Sciatic nerve (tissue), 2 donors: ENCODE measurements at regions of chr18 and their contacts with region 1.

Region 1: GRCh38 chr18:64893349-64893748 is 744.5 kb upstream of the LINC00305 start:
- DNase-seq: no peak
- ATAC-seq: no peak

Region 2: DNA sequence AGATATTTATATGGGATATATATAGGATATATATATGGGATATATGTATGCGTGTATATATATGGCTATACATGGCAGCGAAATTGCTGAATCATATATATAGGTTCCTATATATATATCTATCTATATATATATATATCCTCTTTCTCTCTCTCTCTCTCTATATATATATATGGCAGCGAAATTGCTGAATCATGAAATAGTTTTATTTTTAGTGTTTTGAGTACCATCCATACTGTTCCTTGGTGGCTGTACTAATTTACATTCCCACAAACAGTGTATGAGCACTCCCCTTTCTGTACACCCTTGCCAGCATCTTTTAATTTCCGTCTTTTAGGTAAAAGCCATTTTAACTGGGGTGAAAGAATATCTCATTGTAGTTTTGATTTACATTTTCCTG is 346.9 kb before region 1 on chr18:
- intact Hi-C with region 1: loop called (anchors 5 kb)
- DNase-seq: no peak
- ATAC-seq: no peak

Region 3: GRCh38 chr18:64851726-64852125 is 41.6 kb before region 1 on chr18:
- intact Hi-C with region 1: no loop called
- DNase-seq: no peak
- ATAC-seq: no peak